ENCODE measurements at regions of chrX and their contacts with region 1.

Region 1: GRCh38 chrX:19887911-19888879 is 795 bp upstream of the SH3KBP1 start:
- DNase-seq: peak; percentile 58
- H3K4me3 Mint-ChIP-seq: peak overlapping the region; percentile 78
- H3K27ac Mint-ChIP-seq: peak overlapping the region; percentile 79
- H3K4me1 Mint-ChIP-seq: peaks cover 42% of the 10 kb centered on the region
- H3K27me3 Mint-ChIP-seq: no peaks in the 10 kb centered on the region

Region 2: DNA sequence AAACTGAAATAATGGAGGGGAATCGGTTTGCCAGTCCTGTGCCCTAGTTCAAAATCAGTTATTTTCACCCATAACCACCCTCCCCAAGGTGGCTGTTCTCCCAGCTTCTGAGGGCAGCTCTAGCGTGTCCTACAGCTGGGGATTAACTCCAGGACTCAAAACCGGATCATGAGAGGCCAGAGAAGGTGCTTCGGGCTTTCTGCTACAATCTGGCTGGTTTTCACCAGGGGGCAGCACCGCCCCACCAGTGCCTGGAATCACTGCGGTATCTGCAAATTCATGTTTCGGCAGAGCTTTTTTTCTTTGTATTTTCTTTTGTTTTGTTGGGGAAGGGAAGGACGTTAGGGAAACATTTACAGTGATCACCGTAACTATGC is 516.0 kb before region 1 on chrX:
- CTCF ChIA-PET with region 1: no interaction called
- intact Hi-C with region 1: loop called (anchors 1 kb)
- DNase-seq: peak; percentile 81
- H3K4me3 Mint-ChIP-seq: peak overlapping the region; percentile 66
- H3K27ac Mint-ChIP-seq: no peak overlapping the region
- H3K4me1 Mint-ChIP-seq: peaks cover 5% of the 10 kb centered on the region
- H3K27me3 Mint-ChIP-seq: no peaks in the 10 kb centered on the region

Region 3: GRCh38 chrX:19593690-19594089 is 294.5 kb before region 1 on chrX:
- CTCF ChIA-PET with region 1: no interaction called
- intact Hi-C with region 1: loop called (anchors 1 kb)
- DNase-seq: peak; percentile 25
- H3K4me3 Mint-ChIP-seq: no peak overlapping the region
- H3K27ac Mint-ChIP-seq: peak overlapping the region; percentile 21
- H3K4me1 Mint-ChIP-seq: peaks cover 6% of the 10 kb centered on the region
- H3K27me3 Mint-ChIP-seq: no peaks in the 10 kb centered on the region

Region 4: DNA sequence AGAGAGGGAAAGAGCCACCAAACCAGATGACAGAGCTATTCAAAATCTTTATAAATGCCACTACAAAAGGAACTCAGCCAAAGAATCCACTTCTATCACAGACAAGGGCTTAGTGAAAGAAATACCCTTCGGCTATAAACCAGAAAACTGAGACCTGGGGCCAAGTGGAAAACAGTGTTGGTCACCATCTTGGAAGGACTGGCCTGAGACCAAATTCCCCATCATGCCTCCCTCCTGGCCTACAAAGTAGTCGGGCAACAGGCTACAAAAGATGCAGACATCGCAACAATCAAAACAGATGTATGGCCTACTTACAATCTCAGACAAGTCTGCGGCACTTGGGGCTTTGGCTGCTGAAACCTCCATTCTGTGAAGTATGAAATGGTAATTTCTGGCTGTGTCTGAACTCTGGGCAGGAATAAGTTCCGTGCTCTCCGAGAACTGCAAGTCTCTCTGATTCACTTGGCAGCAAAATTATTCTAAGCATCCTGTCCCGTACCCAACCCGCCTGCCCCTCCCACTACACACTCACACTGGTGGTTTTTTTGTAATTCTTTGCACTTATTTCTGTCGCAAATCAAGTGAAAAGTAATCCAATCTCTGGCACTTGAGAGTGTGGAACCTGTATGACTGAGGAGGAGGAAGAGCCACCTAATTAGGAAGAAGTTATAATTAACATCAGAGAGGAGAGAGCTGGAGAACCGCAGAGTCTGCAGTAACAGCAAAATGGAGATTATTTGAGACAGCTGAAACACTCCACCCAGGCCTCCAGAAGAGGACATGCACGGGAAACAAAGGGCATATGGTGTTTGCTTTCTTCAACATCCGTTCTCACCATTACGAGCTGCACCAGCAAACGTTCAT is 88.6 kb before region 1 on chrX:
- CTCF ChIA-PET with region 1: interaction called, 3 read pairs
- intact Hi-C with region 1: loop called (anchors 2 kb)
- DNase-seq: peak; percentile 68
- H3K4me3 Mint-ChIP-seq: peak overlapping the region; percentile 88
- H3K27ac Mint-ChIP-seq: peak overlapping the region; percentile 99
- H3K4me1 Mint-ChIP-seq: peaks cover 65% of the 10 kb centered on the region
- H3K27me3 Mint-ChIP-seq: no peaks in the 10 kb centered on the region

Region 5: DNA sequence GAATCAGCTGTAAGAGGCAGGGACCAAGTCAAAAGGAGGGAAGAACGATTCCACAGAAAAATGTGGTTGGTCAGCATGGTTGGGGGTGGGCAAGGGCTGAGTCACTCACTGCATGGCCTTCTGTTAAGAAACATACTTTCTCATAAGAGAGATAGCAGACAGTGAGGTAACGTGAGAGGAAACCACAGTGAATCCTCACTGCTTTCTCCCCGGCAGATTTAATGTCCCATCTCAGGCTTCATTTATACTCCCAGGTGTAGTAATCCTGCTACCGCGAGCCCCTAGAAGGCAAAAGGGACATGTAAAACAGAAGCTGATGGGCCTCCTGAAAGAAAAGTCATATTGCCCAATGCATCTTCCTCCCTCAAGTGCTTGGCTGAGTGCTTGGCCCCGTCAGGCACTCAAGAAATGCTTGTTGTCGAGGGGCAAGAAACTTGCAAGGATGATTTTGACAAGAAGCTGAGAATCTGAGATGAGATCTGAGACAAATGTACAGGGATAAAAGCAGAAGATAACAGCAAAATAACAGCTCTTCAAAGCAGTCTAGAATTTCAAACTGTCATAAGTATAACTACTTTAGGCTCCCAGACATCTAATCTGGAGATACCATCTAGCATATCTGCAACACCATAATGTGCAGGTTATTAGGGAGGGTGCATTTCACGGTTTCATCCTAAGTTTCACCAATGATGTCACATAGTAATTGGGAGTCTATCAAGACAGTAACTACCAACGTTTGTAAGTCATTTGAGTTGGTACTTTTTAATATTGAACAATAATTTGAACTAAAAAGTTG is 41.0 kb before region 1 on chrX:
- CTCF ChIA-PET with region 1: no interaction called
- intact Hi-C with region 1: loop called (anchors 2 kb)
- DNase-seq: peak; percentile 33
- H3K4me3 Mint-ChIP-seq: peak overlapping the region; percentile 20
- H3K27ac Mint-ChIP-seq: peak overlapping the region; percentile 73
- H3K4me1 Mint-ChIP-seq: peaks cover 56% of the 10 kb centered on the region
- H3K27me3 Mint-ChIP-seq: no peaks in the 10 kb centered on the region

Region 6: GRCh38 chrX:19958552-19959486 is 70.6 kb after region 1 on chrX:
- CTCF ChIA-PET with region 1: no interaction called
- intact Hi-C with region 1: no loop called
- DNase-seq: no peak
- H3K4me3 Mint-ChIP-seq: no peak overlapping the region
- H3K27ac Mint-ChIP-seq: no peak overlapping the region
- H3K4me1 Mint-ChIP-seq: peaks cover 11% of the 10 kb centered on the region
- H3K27me3 Mint-ChIP-seq: no peaks in the 10 kb centered on the region